ENCODE measurements at regions of chr15 and their contacts with region 1.

Region 1: DNA sequence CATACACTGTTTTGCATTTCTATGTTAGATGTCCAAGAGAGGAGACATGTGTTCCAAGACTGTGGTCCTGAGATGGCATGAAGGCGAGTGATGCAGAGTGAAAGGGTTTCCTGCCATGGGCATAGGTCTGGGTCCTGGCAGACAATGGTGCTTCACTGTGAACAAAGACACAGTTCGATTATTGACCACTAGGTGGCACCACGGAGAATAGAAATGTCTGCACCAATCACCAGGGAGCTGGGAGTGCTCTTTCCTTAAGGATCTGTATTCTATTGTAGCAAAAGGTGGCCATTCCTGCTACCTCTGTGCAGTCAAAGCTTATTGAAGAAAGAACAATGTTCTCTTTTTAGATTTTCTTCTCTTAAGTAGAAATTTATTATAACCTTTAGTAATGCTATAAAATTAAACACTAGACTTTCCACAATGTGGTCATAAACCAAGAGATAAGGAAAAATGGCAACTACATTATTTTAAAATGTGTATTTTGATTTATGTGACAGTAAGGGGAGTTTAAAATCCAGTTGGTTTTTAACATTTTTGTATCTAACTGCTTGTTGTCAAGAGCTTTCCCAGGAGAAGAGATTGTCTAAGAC is 88.7 kb downstream of the GABRG3 start:
- ATAC-seq: peak in 7 of 8 experiments; percentile 35 to 92 (median 74)
- H3K4me3 ChIP-seq: no peak overlapping the region
- H3K27ac ChIP-seq: no peak overlapping the region
- H3K4me1 ChIP-seq: no peaks in the 10 kb centered on the region

Region 2: GRCh38 chr15:27358751-27359434 is 299.2 kb after region 1 on chr15:
- in situ Hi-C with region 1: loop called in 1 of 9 experiments (anchors 25 kb)
- ATAC-seq: peak in 4 of 8 experiments; percentile 22 to 45 (median 32)
- H3K4me3 ChIP-seq: no peak overlapping the region
- H3K27ac ChIP-seq: no peak overlapping the region
- H3K4me1 ChIP-seq: peaks cover 0 to 2% of the 10 kb centered on the region in 2 donors